ENCODE measurements at regions of chr6 and their contacts with region 1.

Region 1: DNA sequence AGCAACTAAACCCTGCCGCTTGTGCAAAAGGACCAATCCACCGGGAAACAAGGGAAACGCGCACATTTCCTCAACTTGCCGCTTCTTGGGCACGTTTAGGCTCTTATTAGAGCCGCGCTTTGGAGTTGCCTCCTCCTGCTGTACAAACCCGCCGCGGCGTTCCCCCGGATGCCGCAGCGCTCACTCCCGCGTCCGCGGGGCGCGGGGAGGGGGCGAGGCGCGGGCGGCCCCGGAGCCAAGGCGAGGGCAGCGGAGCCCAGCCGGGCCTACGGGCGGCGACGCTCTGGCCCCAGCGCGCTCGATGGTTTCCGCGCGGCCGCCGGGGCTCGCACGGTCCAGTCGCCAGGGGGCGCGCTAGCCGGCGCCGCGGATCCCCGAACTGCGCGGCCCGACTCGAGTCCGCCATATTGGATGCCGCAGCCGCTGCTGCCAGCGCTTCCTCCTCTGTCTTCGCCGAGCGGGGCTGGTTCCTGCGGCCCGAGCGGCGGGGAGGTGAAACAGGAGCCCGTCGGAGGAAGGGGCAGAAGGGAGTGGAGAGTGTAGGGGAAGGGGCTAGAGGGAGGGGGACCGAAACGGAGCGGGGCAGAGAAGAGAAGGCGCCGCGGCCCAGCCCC is at the start of gene SCAF8:
- DNase-seq: peak; percentile 90
- H3K4me3 ChIP-seq: peak within 1 kb of the TSS; percentile 98
- H3K27ac ChIP-seq: peak within 1 kb of the TSS; percentile 77
- H3K4me1 ChIP-seq: peaks cover 39% of the 10 kb centered on the region
- CTCF ChIP-seq: peak; percentile 77
- total RNA-seq, gene SCAF8: 23.9 and 25.8 TPM in 2 replicates

Region 2: DNA sequence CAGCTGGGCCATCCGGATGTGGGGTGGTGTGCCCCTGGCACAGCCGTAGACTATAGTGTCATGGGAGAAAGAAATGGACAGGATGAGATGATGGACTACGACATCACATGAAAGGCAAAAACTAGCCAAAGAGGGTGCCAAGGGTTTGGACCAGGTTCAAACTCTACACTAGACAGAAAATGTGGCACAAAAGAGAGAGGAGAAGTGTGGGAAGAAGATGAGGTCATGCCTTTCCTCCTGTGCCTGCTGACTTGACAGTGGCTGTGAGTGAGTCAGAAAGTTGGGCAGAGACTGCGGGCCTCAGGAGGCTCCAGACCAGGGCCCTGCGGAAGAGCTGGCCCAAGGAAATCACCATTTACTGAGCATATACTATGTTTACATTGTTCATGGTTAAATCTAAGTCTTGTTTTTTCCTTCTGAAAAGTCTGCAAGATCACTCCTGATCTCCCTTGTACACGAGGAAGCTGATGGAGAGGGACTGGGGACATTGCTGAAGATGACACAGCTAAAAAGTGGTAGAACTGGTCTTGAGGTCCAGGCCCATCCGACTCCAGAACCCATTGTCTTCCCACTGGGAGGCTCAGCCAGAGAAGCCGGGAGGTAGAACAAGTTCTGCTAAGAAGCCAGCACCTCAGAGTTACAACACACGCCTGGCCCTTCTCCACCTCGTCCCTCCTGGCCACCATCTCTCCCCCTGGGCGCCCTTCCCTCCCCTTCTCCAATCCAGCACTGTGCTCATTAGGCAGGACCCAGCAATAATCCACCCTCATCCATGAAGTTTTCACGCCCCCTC is 258.3 kb before region 1 on chr6:
- CTCF ChIA-PET with region 1: no interaction called
- POLR2A ChIA-PET with region 1: no interaction called
- intact Hi-C with region 1: no loop called
- DNase-seq: no peak
- H3K4me3 ChIP-seq: no peak overlapping the region
- H3K27ac ChIP-seq: no peak overlapping the region
- H3K4me1 ChIP-seq: no peaks in the 10 kb centered on the region
- CTCF ChIP-seq: no peak

Region 3: GRCh38 chr6:154696661-154697060 is 36.5 kb before region 1 on chr6:
- CTCF ChIA-PET with region 1: no interaction called
- POLR2A ChIA-PET with region 1: no interaction called
- intact Hi-C with region 1: no loop called
- DNase-seq: no peak
- H3K4me3 ChIP-seq: no peak overlapping the region
- H3K27ac ChIP-seq: no peak overlapping the region
- H3K4me1 ChIP-seq: no peaks in the 10 kb centered on the region
- CTCF ChIP-seq: no peak

Region 4: DNA sequence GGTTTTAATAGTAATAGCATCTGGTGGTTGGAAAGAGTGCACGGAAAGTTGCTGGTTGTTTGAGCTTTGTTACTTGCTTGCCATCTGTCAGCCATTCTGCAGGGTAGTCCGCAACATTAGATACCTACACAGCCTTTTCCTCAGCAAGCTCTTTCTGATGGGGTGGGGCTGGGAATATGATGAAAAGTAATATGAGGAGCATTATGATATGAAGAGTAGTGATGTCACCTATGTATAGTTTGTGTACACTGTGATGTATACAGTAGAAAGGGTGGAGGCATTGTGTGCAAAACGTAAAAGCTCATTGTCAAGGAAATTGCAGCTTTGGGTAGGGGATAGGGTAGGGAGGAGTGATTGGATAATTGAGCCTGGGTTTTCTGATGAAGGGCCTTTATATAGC is 16.2 kb after region 1 on chr6:
- CTCF ChIA-PET with region 1: interaction called, 3 read pairs
- POLR2A ChIA-PET with region 1: interaction called, 16 read pairs
- intact Hi-C with region 1: no loop called
- DNase-seq: no peak
- H3K4me3 ChIP-seq: no peak overlapping the region
- H3K27ac ChIP-seq: no peak overlapping the region
- H3K4me1 ChIP-seq: peaks cover 13% of the 10 kb centered on the region
- CTCF ChIP-seq: no peak

Region 5: GRCh38 chr6:154805288-154805911 is 72.3 kb after region 1 on chr6:
- CTCF ChIA-PET with region 1: no interaction called
- POLR2A ChIA-PET with region 1: interaction called, 4 read pairs
- intact Hi-C with region 1: loop called (anchors 2 kb)
- DNase-seq: peak; percentile 59
- H3K4me3 ChIP-seq: no peak overlapping the region
- H3K27ac ChIP-seq: no peak overlapping the region
- H3K4me1 ChIP-seq: peaks cover 3% of the 10 kb centered on the region
- CTCF ChIP-seq: peak; percentile 79

Region 6: GRCh38 chr6:154814063-154814462 is 80.9 kb after region 1 on chr6:
- CTCF ChIA-PET with region 1: no interaction called
- POLR2A ChIA-PET with region 1: interaction called, 3 read pairs
- intact Hi-C with region 1: loop called (anchors 1 kb)
- DNase-seq: peak; percentile 81
- H3K4me3 ChIP-seq: peak overlapping the region; percentile 38
- H3K27ac ChIP-seq: peak overlapping the region; percentile 91
- H3K4me1 ChIP-seq: peaks cover 62% of the 10 kb centered on the region
- CTCF ChIP-seq: 0 out of 2 replicates have a peak, but pooled peaks have one; percentile 11

Measured in OCI-LY7 (cell line).